Motor neuron (in vitro differentiated cells): ENCODE measurements at regions of chr13 and their contacts with region 1.

Region 1: DNA sequence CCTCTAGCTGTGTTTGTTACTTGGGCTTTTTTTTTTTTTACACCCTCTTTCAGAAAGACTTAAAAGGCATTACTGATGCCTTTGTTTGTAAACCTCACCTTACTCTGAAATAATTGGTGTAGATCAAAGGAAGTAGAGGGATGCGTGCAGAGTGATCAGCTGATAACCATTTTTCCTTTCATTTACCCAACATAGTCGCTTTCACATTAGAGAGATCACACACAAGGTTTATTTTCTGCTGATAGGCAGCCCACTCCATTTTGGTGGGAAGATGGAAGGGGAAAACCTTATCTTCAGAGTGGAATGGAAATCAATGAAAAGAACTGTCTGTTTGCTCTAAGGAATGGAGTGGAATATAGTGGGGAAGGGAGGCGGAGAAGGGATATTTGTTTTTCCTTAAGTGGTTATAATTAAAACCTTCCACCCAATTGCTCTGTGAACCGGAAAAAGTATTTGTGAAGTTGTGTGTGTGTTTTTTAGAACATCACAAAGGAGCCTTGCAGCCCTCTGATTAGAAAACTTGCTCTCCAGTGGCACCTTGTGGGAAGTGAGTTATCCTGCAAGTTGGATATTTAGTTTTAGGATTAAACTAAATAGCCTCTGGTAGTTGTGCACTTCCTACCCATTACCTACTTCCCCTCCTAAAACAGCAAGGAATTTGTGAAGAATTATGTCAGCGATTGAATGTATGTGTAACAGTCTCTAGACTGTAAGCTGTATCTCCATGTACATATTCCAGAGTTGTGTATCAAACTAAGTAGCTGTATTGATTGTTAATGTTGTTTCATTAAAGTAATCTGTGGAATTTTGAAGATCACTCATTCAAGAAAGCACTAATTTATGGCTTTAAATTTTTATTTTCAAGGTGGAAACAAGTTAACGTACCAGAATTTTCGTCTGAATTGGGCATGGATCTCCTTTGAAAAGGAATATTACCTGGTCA is 76.8 kb downstream of the FREM2 start:
- ATAC-seq: peak in 5 of 8 experiments; percentile 28 to 78 (median 65)
- H3K4me3 ChIP-seq: no peak overlapping the region
- H3K27ac ChIP-seq: no peak overlapping the region
- H3K4me1 ChIP-seq: peaks cover 0 to 5% of the 10 kb centered on the region in 2 donors

Region 2: GRCh38 chr13:38582133-38582532 is 181.6 kb before region 1 on chr13:
- in situ Hi-C with region 1: loop called in 1 of 9 experiments (anchors 25 kb)
- ATAC-seq: peak; percentile 61 to 93 (median 85)
- H3K4me3 ChIP-seq: no peak overlapping the region
- H3K27ac ChIP-seq: no peak overlapping the region
- H3K4me1 ChIP-seq: no peaks in the 10 kb centered on the region